ENCODE measurements at regions of chr2 and their contacts with region 1.

Region 1: DNA sequence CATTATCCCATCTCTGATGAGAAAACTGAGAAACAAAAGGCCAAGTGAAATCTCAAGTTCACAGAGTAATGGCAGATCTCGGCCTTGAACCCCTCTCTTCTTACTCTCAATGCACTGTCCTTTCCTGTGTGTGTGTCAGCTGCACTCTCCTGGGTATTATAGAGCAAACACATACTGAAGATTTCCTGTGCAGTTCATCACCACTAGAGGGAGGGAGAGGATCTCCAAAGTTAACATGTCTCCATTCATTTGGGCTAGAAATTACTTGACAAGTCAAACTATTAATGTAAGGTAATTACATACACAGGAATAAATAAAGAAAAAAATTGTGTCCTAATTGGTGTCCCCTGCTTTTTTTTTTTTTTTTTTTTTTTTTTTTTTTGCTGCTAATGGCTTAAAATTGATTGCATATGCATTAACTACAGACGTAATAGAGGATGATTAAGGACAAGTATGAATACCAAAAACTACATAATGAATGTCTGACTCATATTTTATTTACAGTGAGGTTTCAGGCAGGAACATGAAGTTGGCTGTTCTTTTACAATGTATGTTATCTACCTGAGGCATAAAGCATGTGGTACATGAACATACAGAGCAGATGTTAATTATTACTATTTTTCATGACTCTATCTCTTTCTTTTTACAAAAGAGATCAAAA is 269.2 kb downstream of the NYAP2 start:
- DNase-seq: no peak

Region 2: GRCh38 chr2:225425284-225425683 is 243.5 kb before region 1 on chr2:
- intact Hi-C with region 1: no loop called
- DNase-seq: no peak

Region 3: GRCh38 chr2:225797394-225797793 is 128.7 kb after region 1 on chr2:
- intact Hi-C with region 1: loop called (anchors 5 kb)
- DNase-seq: no peak

Region 4: GRCh38 chr2:226984750-226985582 is 1316.2 kb after region 1 on chr2:
- intact Hi-C with region 1: loop called (anchors 5 kb)
- DNase-seq: no peak

Region 5: DNA sequence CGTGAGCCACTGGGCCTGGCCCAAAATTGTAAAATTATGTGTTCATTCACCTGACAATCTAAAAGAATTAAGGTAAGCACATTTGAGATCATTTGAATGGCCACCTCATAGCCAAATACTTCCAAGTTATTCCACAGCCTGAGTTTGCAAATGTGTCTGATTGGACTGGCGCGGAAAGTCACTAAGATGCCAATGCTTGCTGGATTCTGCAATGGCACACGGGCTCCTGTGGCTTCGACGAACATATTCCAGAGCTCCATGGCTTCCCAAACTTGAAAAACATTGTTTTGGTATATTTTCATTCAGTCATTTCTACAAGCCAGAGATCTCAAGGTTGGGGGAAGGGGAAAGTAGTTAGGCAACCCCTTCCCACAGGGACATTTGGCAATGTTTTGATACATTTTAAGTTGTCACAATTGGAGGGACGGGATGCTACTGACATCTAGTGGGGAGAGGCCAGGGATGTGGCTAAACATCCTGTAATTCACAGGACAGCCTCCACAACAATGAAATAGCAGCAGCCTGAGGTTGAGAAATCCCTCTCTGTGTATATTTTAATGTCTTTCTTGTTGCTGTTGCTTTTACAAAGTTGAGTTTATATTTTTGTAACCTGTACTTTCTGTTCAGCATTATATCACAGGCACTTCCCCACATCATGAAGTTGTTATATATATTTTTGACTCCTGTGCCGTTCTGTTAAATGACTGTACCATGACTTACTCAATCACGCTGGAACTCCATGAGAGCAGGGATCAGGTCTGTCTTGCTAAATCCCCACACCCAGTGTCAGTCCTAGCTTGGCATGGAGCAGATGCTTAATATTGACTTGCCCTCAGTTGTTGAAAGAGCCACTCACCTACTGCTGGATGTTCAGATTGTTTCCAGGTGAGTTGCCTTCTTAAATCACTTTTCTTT is 1438.4 kb after region 1 on chr2:
- intact Hi-C with region 1: loop called (anchors 2 kb)
- DNase-seq: no peak